Activated CD8-positive, alpha-beta memory T cell treated with anti-CD3 and anti-CD28 coated beads, Interleukin-2, amount 10 ng/mL, durations not matched to agents 7 days and 5 days (primary cell): ENCODE measurements at regions of chr11 and their contacts with region 1.

Region 1: GRCh38 chr11:9003573-9004309 is at the start of gene NRIP3:
- DNase-seq: peak; percentile 78
- ATAC-seq: peak; percentile 90
- H3K4me3 Mint-ChIP-seq: peak within 1 kb of the TSS; percentile 67
- H3K27ac Mint-ChIP-seq: no peak within 1 kb of the TSS
- H3K4me1 Mint-ChIP-seq: peaks cover 23% of the 10 kb centered on the region
- H3K27me3 Mint-ChIP-seq: peaks cover 62% of the 10 kb centered on the region
- total RNA-seq, gene NRIP3: 0.91 to 2.1 TPM

Region 2: DNA sequence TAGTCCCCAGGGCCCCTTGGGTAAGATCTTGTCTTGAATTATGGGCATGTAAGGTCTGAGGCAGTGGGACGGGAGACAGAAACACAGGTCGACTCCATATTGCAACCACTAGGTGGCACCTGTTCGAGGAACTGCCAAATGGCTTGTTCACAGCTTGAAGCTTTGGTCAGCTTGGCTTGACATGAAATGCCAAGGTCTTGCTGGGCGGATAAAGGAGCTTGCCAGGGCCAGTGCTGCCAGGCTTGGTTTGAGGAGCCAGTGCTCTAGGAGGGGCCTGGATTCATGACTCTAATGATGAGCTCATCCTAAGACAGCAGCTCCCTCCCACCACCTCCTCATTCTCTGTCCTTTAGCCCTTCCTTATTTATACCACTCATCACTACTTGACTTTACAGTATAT is 11.9 kb after region 1 on chr11:
- CTCF ChIA-PET with region 1: interaction called, 24 read pairs
- DNase-seq: peak; percentile 73
- ATAC-seq: peak; percentile 87
- H3K4me3 Mint-ChIP-seq: no peak overlapping the region
- H3K27ac Mint-ChIP-seq: no peak overlapping the region
- H3K4me1 Mint-ChIP-seq: peaks cover 18% of the 10 kb centered on the region
- H3K27me3 Mint-ChIP-seq: peaks cover 19% of the 10 kb centered on the region